ENCODE measurements at regions of chr19 and their contacts with region 1.

Region 1: DNA sequence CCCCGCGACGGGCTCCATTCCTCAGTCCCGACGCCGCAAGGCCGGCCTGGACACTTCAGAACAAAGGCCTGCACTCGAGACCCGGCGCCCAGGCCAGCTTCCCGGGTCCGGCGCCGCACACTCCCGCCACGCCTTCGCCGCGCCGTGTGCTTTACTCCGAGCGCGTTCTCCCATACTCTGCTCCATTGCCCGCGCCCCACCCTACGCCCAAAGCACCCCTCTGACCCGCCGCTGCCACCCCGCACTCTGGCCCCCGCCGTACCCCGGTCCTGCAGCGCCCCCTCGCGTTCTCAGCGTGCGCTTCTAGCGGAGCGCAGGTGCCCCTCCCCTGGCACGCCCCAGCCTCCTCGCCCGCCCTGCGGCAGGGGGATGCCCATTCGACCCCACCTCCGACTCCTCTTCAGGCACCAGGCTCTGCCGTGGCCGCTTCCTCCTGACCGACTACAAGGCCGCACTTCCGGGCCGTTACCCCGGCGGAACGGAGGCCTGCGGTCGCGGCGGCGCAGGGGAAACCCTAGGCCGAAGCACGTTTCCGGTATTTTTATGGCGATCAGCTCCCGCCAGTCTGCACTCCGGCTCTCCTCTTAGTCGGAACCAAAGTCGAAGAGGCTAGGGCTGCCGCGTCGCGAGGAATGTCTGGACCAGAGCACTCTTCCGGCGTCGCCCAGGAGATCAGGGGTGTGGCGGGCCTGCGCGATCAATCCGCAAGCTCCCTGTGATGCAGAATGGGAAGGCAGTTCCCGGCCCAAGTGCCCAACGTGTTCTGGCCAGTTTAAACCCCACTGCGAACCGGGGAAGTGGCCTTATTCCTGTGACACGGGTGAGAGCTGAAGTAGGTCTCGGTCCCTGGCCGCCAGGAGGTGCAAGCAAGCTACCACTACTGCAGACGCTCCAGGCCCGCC is at the start of gene ZBTB45:
- DNase-seq: peak; percentile 94
- ATAC-seq: peak; percentile 84
- H3K4me3 Mint-ChIP-seq: peak within 1 kb of the TSS; percentile 96
- H3K27ac Mint-ChIP-seq: peak within 1 kb of the TSS; percentile 92
- H3K4me1 Mint-ChIP-seq: peaks cover 50% of the 10 kb centered on the region
- H3K27me3 Mint-ChIP-seq: no peaks in the 10 kb centered on the region
- total RNA-seq, gene ZBTB45: 15.1 to 16.9 TPM

Region 2: DNA sequence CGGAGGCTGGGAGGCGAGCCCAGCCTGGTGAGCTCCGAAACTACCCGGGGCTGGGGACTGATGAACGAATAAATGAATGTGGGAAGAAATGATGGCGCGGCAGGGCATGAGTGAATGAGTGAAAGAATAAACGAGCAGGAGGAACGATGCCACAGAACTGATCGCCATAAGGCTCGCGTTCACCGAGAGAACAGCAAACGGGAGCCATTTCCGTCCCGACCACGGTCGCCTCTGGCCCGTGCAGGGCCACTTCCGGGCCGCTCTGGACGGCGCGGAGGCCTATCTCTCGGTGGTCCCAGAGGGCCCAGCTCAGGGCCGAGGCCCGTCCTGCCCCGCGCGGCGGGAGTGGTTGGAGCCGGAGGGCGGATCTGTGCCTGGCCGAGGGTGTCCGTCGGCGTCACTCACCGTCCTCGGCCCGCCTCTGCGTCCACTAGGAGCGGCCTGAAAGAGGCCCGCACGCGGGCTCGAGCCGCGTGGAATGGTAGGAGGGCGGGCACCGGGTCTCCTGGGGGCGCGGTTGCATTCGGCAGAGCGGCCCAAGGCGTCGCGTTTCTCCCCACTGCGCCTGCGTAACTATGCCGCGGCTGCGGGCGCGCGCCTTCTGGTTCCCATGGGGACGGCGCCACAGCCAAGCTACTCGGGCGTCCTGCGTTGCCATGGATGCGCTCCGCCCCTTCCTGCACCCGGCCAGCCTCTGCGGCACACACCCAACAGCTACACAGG is 157.2 kb before region 1 on chr19 and contains the start of gene ZNF497:
- CTCF ChIA-PET with region 1: interaction called, 11 read pairs
- DNase-seq: peak; percentile 98
- ATAC-seq: peak; percentile 91
- H3K4me3 Mint-ChIP-seq: peak within 1 kb of the TSS; percentile 95
- H3K27ac Mint-ChIP-seq: peak within 1 kb of the TSS; percentile 90
- H3K4me1 Mint-ChIP-seq: peaks cover 18% of the 10 kb centered on the region
- H3K27me3 Mint-ChIP-seq: no peaks in the 10 kb centered on the region
- total RNA-seq, gene ZNF497: 0.87 to 0.91 TPM

Region 3: GRCh38 chr19:58492265-58492664 is 27.3 kb before region 1 on chr19:
- CTCF ChIA-PET with region 1: interaction called, 30 read pairs
- DNase-seq: no peak
- ATAC-seq: no peak
- H3K4me3 Mint-ChIP-seq: no peak overlapping the region
- H3K27ac Mint-ChIP-seq: no peak overlapping the region
- H3K4me1 Mint-ChIP-seq: peaks cover 25% of the 10 kb centered on the region
- H3K27me3 Mint-ChIP-seq: no peaks in the 10 kb centered on the region

Region 4: DNA sequence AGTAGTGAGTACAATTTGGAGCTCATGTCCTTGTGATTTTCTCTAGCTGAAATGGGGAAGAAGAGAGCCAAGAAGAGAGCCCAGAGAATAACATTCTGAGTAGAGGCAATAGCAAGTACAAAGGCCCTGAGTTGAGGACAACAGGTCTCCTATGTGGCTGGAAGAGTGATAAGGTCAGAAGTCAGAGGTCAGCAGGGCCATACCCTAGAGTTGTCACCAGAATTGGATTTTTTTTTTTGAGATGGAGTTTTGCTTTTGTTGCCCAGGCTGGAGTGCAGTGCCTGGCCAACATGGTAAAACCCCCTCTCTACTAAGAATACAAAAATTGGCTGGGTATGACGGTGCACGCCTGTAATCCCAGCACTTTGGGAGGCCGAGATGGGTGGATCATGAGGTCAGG is 16.3 kb after region 1 on chr19:
- CTCF ChIA-PET with region 1: interaction called, 33 read pairs
- DNase-seq: no peak
- ATAC-seq: no peak
- H3K4me3 Mint-ChIP-seq: no peak overlapping the region
- H3K27ac Mint-ChIP-seq: no peak overlapping the region
- H3K4me1 Mint-ChIP-seq: peaks cover 12% of the 10 kb centered on the region
- H3K27me3 Mint-ChIP-seq: peaks cover 12% of the 10 kb centered on the region

Region 5: DNA sequence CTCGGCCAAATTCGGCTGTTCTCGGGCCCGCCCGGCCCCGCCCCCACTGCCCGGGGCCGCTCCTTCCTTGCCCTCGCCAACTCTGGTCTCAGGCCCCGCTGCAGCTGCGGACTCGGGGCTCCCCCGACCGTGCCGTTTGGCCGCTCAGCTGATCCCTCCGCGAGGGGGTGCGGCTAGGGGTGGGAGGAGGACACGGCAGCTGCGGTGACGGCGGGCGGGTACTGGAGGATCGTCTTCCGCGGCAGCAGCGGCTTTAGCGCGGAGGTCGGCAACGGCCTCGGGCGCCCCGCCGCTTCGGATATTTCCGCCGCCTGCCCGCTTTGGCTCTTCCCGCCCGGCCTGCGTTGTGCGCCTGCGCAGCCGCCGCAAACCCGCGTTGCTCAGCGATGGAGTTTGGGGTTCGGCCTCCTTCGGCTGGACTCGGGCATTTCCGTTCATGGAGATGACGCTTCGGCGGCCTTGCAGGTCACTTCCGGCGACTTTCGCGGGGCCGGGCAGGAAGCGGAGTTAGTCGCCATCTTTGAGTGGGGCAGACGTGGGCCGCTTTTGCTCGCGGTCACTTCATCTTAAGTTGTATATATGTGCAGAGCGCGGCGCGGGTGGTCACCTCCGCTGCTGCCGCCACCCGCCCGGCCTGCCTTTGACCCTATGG is 39.1 kb after region 1 on chr19:
- CTCF ChIA-PET with region 1: interaction called, 49 read pairs
- DNase-seq: peak; percentile 100
- ATAC-seq: peak; percentile 69
- H3K4me3 Mint-ChIP-seq: peak overlapping the region; percentile 95
- H3K27ac Mint-ChIP-seq: peak overlapping the region; percentile 100
- H3K4me1 Mint-ChIP-seq: peaks cover 80% of the 10 kb centered on the region
- H3K27me3 Mint-ChIP-seq: no peaks in the 10 kb centered on the region

Measured in activated CD8-positive, alpha-beta memory T cell treated with anti-CD3 and anti-CD28 coated beads, Interleukin-2, amount 10 ng/mL, durations not matched to agents 7 days and 5 days (primary cell).